Motor neuron (in vitro differentiated cells): ENCODE measurements at regions of chr2 and their contacts with region 1.

Region 1: GRCh38 chr2:231900486-231900942 is 25.7 kb downstream of the NPPC start:
- ATAC-seq: peak; percentile 33 to 97 (median 66)
- H3K4me3 ChIP-seq: no peak overlapping the region
- H3K27ac ChIP-seq: no peak overlapping the region
- H3K4me1 ChIP-seq: no peaks in the 10 kb centered on the region

Region 2: GRCh38 chr2:231696007-231696371 is 204.5 kb before region 1 on chr2:
- in situ Hi-C with region 1: no loop called
- ATAC-seq: peak in 3 of 8 experiments; percentile 57 to 75 (median 61)
- H3K4me3 ChIP-seq: no peak overlapping the region
- H3K27ac ChIP-seq: no peak overlapping the region
- H3K4me1 ChIP-seq: no peaks in the 10 kb centered on the region

Region 3: GRCh38 chr2:232142049-232142448 is 241.5 kb after region 1 on chr2:
- in situ Hi-C with region 1: loop called in 2 of 9 experiments (anchors 25 kb)
- ATAC-seq: peak in 3 of 8 experiments; percentile 48 to 77 (median 51)
- H3K4me3 ChIP-seq: no peak overlapping the region
- H3K27ac ChIP-seq: no peak overlapping the region
- H3K4me1 ChIP-seq: no peaks in the 10 kb centered on the region

Region 4: GRCh38 chr2:232327105-232328041 is 426.9 kb after region 1 on chr2:
- in situ Hi-C with region 1: loop called in 6 of 9 experiments (anchors 10 to 25 kb)
- ATAC-seq: peak; percentile 63 to 87 (median 74)
- H3K4me3 ChIP-seq: no peak overlapping the region
- H3K27ac ChIP-seq: no peak overlapping the region
- H3K4me1 ChIP-seq: peaks cover 0 to 6% of the 10 kb centered on the region in 2 donors

Region 5: DNA sequence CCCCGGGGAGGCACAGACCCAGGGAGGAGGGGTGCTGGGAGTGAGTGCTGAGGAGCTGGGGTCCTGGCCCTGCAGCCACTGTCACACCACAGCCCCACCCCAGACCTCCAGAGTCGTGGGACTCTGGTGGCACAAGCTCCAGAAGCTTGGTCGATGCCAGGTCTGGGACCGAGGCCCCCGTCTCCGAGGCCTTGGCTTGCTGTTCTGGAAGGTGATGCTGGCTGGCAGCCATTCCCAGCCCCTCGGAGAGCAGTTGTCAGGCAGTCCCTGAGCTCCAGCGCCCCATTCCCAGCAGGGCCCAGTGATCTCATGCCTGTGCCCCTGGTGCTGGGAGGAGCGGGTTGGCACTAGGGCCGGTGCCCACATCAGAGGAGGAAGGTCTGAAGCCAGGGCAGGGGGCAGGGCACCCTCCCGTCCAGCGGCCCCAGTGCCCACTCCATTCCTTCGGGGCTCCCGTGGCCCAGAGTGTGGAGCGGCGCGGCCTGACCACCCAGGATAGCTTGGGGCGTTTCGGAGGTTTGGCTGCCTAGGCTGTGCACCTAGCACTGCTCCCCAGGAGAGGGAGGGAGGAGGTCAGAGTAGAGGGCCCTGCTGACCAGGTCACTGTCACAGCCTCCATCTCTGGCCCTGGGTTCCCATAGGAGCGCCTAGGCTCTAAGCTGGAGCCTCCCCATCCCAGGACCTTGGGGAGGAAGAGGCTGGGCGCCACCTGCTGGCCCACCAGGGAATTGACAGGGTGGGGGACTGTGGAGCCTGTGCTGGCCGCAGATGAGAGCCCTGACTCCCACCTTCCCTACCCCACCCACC is 538.6 kb after region 1 on chr2:
- in situ Hi-C with region 1: loop called in 6 of 9 experiments (anchors 10 to 25 kb)
- ATAC-seq: peak; percentile 54 to 78 (median 62)
- H3K4me3 ChIP-seq: no peak overlapping the region
- H3K27ac ChIP-seq: no peak overlapping the region
- H3K4me1 ChIP-seq: peaks cover 3% of the 10 kb centered on the region in 2 donors

Region 6: DNA sequence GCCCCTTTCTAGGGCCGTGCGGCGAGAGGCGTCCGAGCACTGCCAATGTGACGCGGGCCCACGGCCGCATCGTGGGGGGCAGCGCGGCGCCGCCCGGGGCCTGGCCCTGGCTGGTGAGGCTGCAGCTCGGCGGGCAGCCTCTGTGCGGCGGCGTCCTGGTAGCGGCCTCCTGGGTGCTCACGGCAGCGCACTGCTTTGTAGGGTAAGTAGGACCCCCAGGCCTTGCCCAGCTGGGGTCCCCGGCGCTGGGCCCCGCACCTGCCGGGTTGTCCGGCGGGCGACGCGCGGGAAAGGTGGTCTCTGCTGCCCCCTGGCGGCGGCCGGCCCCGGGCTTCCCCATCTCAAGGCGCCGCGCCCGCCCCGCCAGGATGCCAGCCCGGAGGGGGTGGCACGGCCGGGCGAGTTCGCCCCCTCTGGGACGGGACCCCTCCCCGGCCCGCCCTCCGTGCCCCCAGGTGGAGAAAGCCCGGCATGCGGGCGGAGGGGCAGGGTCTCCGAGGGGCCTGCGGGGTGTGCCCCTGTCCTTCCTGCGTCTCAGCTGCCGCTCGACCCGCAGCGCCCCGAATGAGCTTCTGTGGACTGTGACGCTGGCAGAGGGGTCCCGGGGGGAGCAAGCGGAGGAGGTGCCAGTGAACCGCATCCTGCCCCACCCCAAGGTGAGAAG is 621.6 kb after region 1 on chr2:
- in situ Hi-C with region 1: loop called in 4 of 9 experiments (anchors 10 to 25 kb)
- ATAC-seq: peak; percentile 23 to 76 (median 36)
- H3K4me3 ChIP-seq: peak overlapping the region; percentile 25 to 40 (median 35)
- H3K27ac ChIP-seq: no peak overlapping the region
- H3K4me1 ChIP-seq: peaks cover 43 to 56% of the 10 kb centered on the region in 2 donors